Naive thymus-derived CD4-positive, alpha-beta T cell (primary cell): ENCODE measurements at regions of chr11 and their contacts with region 1.

Region 1: DNA sequence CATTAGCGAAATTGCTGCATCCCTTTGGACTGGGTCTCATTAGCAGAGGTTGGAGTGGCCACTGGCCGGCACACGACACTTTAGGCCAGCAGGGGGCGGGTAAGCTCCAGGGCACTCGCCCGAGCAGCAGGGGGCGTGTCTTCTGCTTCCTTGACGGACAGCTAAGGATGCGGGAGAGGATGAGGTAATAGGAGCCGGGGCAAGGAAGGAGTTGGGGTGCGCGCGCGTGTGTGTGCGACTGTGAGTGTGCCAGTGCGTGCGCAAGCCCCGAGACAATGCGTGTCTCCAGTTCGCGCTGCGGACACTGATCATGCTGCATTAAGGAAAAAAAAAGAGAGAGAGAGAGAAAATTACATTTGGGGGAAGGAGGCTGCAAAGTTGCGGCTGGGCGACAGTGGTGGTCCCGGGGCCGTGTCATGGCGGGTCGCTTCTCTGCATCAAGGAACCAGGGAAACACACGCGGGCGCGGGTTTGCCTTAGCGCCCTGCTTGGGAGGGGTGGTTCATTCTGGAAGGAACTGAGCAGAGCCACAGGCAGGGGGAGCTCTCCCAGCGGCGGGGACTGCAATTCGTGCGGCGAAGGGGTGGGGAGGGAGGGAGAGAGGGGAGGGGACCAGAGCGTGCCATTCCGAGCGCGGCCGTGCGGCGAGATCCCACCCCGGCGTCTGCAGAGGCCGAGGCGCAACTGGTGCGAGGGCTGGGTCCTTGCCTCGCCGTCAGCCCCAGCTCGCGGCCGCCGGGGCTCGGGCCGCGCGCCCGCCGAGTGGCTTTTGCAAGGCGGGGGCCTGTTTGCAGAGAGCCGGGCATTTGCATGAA is at the start of gene DTX4:
- DNase-seq: peak; percentile 69 to 87 (median 84)
- ATAC-seq: peak; percentile 94
- H3K4me3 ChIP-seq: peak within 1 kb of the TSS; percentile 85
- H3K4me3 Mint-ChIP-seq: peak within 1 kb of the TSS; percentile 81 to 92 (median 89)
- H3K27ac ChIP-seq: peak within 1 kb of the TSS; percentile 10
- H3K27ac Mint-ChIP-seq: peak within 1 kb of the TSS in 5 of 9 donors; percentile 13 to 75 (median 65)
- H3K4me1 ChIP-seq: peaks cover 4 to 7% of the 10 kb centered on the region in 2 donors
- H3K4me1 Mint-ChIP-seq: peaks cover 0 to 16% (median 10%) of the 10 kb centered on the region in 7 donors
- H3K27me3 ChIP-seq: no peaks in the 10 kb centered on the region
- H3K27me3 Mint-ChIP-seq: peaks cover 0 to 43% (median 7%) of the 10 kb centered on the region in 5 donors
- total RNA-seq, gene DTX4: 0.22 to 3.9 (median 2.2) TPM

Region 2: GRCh38 chr11:58837707-58838388 is 333.9 kb before region 1 on chr11:
- CTCF ChIA-PET with region 1: no interaction called
- POLR2A ChIA-PET with region 1: no interaction called
- intact Hi-C with region 1: no loop called
- DNase-seq: no peak
- ATAC-seq: no peak
- H3K4me3 ChIP-seq: no peak overlapping the region
- H3K4me3 Mint-ChIP-seq: no peak overlapping the region
- H3K27ac ChIP-seq: no peak overlapping the region
- H3K27ac Mint-ChIP-seq: no peak overlapping the region
- H3K4me1 ChIP-seq: no peaks in the 10 kb centered on the region
- H3K4me1 Mint-ChIP-seq: no peaks in the 10 kb centered on the region
- H3K27me3 ChIP-seq: no peaks in the 10 kb centered on the region
- H3K27me3 Mint-ChIP-seq: peaks cover 0 to 55% (median 30%) of the 10 kb centered on the region in 5 donors

Region 3: DNA sequence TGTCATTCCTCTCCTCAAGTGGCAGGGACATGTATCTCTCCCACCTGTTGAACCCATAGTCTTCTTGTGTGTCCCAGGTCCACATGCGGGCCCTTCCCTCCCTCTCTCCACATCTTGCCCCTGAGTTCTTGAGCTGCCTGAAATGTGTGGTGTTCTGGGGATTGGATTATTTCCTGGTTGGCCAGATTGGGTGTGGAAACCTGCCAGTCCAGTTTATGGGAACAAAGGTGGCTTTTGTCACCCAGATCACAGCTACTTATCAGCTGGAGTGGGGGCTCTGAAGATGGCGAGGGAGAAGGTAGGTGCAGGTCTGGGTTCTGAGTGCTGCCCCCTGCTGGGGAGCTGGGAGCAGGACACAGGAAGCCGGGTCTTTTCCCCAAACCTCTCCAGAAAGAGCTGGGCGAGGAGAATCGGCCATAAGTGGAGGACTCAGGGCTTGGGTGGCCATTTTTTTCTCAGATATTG is 14.4 kb after region 1 on chr11:
- CTCF ChIA-PET with region 1: interaction called, 59 read pairs
- POLR2A ChIA-PET with region 1: no interaction called
- intact Hi-C with region 1: loop called (anchors 1 kb)
- DNase-seq: peak; percentile 18 to 58 (median 46)
- ATAC-seq: peak; percentile 77
- H3K4me3 ChIP-seq: no peak overlapping the region
- H3K4me3 Mint-ChIP-seq: no peak overlapping the region
- H3K27ac ChIP-seq: no peak overlapping the region
- H3K27ac Mint-ChIP-seq: no peak overlapping the region
- H3K4me1 ChIP-seq: no peaks in the 10 kb centered on the region
- H3K4me1 Mint-ChIP-seq: no peaks in the 10 kb centered on the region
- H3K27me3 ChIP-seq: no peaks in the 10 kb centered on the region
- H3K27me3 Mint-ChIP-seq: peaks cover 0 to 12% (median 0%) of the 10 kb centered on the region in 5 donors

Region 4: DNA sequence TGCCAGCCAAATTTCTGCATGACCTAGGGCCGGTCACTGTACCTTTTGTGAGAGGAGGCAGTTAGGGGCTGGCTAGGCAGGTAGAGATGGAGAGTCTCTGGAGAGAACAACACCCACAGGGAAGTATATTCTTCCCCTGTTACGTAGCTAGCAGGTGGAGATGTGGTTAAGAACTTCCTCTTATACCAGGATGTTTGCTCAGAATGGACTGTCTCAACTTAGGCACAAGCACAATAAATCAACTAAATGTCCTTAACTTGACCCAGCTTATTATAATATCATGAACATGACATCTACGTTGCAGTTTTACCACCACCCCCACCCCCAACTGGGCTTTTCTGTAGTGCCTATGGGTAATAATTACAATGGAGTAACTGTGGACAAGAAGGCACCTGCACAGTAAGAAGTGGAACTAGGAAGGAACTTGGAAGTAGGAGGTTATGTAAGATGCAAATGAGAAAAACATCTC is 101.7 kb after region 1 on chr11:
- CTCF ChIA-PET with region 1: interaction called, 12 read pairs
- POLR2A ChIA-PET with region 1: interaction called, 4 read pairs
- intact Hi-C with region 1: no loop called
- DNase-seq: peak in 6 of 9 donors; percentile 4 to 40 (median 34)
- ATAC-seq: peak; percentile 88
- H3K4me3 ChIP-seq: no peak overlapping the region
- H3K4me3 Mint-ChIP-seq: peak overlapping the region in 9 of 10 donors; percentile 42 to 71 (median 64)
- H3K27ac ChIP-seq: no peak overlapping the region
- H3K27ac Mint-ChIP-seq: peak overlapping the region; percentile 36 to 93 (median 84)
- H3K4me1 ChIP-seq: peaks cover 7 to 23% of the 10 kb centered on the region in 2 donors
- H3K4me1 Mint-ChIP-seq: peaks cover 16 to 49% (median 38%) of the 10 kb centered on the region in 7 donors
- H3K27me3 ChIP-seq: no peaks in the 10 kb centered on the region
- H3K27me3 Mint-ChIP-seq: no peaks in the 10 kb centered on the region

Region 5: GRCh38 chr11:59429924-59430516 is 258.3 kb after region 1 on chr11:
- CTCF ChIA-PET with region 1: interaction called, 13 read pairs
- POLR2A ChIA-PET with region 1: no interaction called
- intact Hi-C with region 1: loop called (anchors 1 kb)
- DNase-seq: peak in 7 of 9 donors; percentile 22 to 64 (median 48)
- ATAC-seq: peak; percentile 77
- H3K4me3 ChIP-seq: no peak overlapping the region
- H3K4me3 Mint-ChIP-seq: no peak overlapping the region
- H3K27ac ChIP-seq: no peak overlapping the region
- H3K27ac Mint-ChIP-seq: no peak overlapping the region
- H3K4me1 ChIP-seq: no peaks in the 10 kb centered on the region
- H3K4me1 Mint-ChIP-seq: no peaks in the 10 kb centered on the region
- H3K27me3 ChIP-seq: peaks cover 0 to 3% of the 10 kb centered on the region in 2 donors
- H3K27me3 Mint-ChIP-seq: peaks cover 5 to 22% (median 13%) of the 10 kb centered on the region in 5 donors

Region 6: DNA sequence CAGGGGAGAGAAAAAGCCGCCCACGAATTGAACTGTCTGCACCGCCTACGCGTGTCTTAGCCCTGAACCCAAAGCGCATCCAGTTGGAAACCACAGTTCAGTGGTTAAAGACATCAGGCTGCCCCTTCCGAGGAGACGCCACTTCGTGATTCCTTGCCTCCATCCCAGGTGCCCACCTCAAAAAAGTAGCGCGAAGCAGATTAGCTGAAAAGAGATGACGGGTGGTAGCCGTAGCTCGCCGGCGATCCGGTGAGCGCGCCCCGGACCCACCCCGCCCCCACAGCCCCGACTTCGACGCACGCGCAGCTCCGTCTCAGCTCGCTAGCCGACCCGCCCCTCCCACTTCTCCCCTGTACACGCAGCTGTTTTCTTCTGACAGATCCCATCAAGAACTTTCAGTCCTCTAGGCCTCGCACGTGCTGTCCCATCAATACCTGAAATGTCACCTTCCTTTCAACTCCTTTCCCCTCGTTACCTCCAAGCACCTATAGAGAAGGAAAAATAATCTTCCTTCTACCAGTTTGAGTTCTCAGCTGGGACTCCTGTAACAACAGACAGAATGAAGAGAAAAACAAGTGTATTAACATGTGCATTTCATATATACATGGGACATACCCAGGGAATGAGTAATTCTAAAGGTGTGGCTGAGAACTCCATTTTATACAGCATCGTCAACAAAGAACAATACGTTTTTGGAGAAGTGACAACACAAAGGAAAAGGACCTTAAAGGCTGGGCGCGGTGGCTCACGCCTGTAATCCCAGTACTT is 389.2 kb after region 1 on chr11:
- CTCF ChIA-PET with region 1: interaction called, 3 read pairs
- POLR2A ChIA-PET with region 1: no interaction called
- intact Hi-C with region 1: loop called (anchors 5 to 10 kb)
- DNase-seq: peak; percentile 59 to 82 (median 78)
- ATAC-seq: peak; percentile 85
- H3K4me3 ChIP-seq: peak overlapping the region; percentile 98
- H3K4me3 Mint-ChIP-seq: peak overlapping the region; percentile 81 to 99 (median 96)
- H3K27ac ChIP-seq: peak overlapping the region; percentile 72
- H3K27ac Mint-ChIP-seq: peak overlapping the region; percentile 87 to 99 (median 96)
- H3K4me1 ChIP-seq: peaks cover 20 to 26% of the 10 kb centered on the region in 2 donors
- H3K4me1 Mint-ChIP-seq: peaks cover 27 to 63% (median 51%) of the 10 kb centered on the region in 7 donors
- H3K27me3 ChIP-seq: no peaks in the 10 kb centered on the region
- H3K27me3 Mint-ChIP-seq: peaks cover 0 to 14% (median 0%) of the 10 kb centered on the region in 5 donors

Region 7: GRCh38 chr11:59753650-59754493 is 582.2 kb after region 1 on chr11:
- CTCF ChIA-PET with region 1: no interaction called
- POLR2A ChIA-PET with region 1: no interaction called
- intact Hi-C with region 1: loop called in 1 of 2 experiments (anchors 5 kb)
- DNase-seq: peak; percentile 65 to 84 (median 75)
- ATAC-seq: peak; percentile 80
- H3K4me3 ChIP-seq: peak overlapping the region; percentile 91
- H3K4me3 Mint-ChIP-seq: peak overlapping the region; percentile 90 to 98 (median 95)
- H3K27ac ChIP-seq: peak overlapping the region; percentile 61
- H3K27ac Mint-ChIP-seq: peak overlapping the region; percentile 32 to 88 (median 71)
- H3K4me1 ChIP-seq: peaks cover 8 to 12% of the 10 kb centered on the region in 2 donors
- H3K4me1 Mint-ChIP-seq: peaks cover 11 to 35% (median 23%) of the 10 kb centered on the region in 7 donors
- H3K27me3 ChIP-seq: no peaks in the 10 kb centered on the region
- H3K27me3 Mint-ChIP-seq: peaks cover 6 to 15% (median 10%) of the 10 kb centered on the region in 5 donors

Region 8: GRCh38 chr11:59802639-59803176 is 631.0 kb after region 1 on chr11:
- CTCF ChIA-PET with region 1: interaction called, 3 read pairs
- POLR2A ChIA-PET with region 1: no interaction called
- intact Hi-C with region 1: loop called in 1 of 2 experiments (anchors 1 kb)
- DNase-seq: peak in 7 of 9 donors; percentile 43 to 70 (median 65)
- ATAC-seq: peak; percentile 81
- H3K4me3 ChIP-seq: no peak overlapping the region
- H3K4me3 Mint-ChIP-seq: no peak overlapping the region
- H3K27ac ChIP-seq: no peak overlapping the region
- H3K27ac Mint-ChIP-seq: peak overlapping the region in 1 of 9 donors; percentile 45
- H3K4me1 ChIP-seq: no peaks in the 10 kb centered on the region
- H3K4me1 Mint-ChIP-seq: peaks cover 0 to 26% (median 0%) of the 10 kb centered on the region in 7 donors
- H3K27me3 ChIP-seq: no peaks in the 10 kb centered on the region
- H3K27me3 Mint-ChIP-seq: no peaks in the 10 kb centered on the region